Heart right ventricle (tissue), 16 donors: ENCODE measurements at regions of chr1 and their contacts with region 1.

Region 1: GRCh38 chr1:161225534-161226319 is at the start of gene TOMM40L:
- DNase-seq: peak; percentile 85 to 95
- ATAC-seq: peak; percentile 95 to 97 (median 96)
- H3K4me3 ChIP-seq: peak within 1 kb of the TSS; percentile 50 to 94 (median 68)
- H3K27ac ChIP-seq: peak within 1 kb of the TSS; percentile 51 to 92 (median 86)
- H3K4me1 ChIP-seq: peaks cover 6 to 30% (median 25%) of the 10 kb centered on the region in 9 donors
- H3K27me3 ChIP-seq: no peaks in the 10 kb centered on the region
- CTCF ChIP-seq: peak; percentile 17 to 76 (median 57)
- total RNA-seq, gene TOMM40L: 29.8 to 37.6 (median 33.2) TPM

Region 2: DNA sequence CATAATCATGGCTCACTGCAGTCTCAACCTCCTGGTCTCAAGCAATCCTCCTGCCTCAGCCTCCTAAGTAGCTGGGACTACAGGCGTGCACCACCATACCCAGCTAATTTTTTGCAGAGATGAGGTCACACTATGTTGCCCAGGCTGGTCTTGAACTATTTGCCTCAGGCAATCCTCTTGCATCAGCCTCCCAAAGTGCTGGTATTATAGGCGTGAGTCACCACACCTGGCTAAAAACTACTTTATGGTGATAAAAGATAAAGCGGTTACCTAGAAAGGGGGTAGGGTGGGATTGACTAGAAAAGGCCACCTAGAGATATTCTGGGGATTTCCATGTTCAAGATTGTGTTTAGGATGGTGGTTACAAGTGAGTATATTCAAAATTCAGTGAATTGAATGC is 192.0 kb before region 1 on chr1:
- intact Hi-C with region 1: no loop called
- DNase-seq: no peak
- ATAC-seq: no peak
- H3K4me3 ChIP-seq: no peak overlapping the region
- H3K27ac ChIP-seq: no peak overlapping the region
- H3K4me1 ChIP-seq: peaks cover 0 to 26% (median 0%) of the 10 kb centered on the region in 9 donors
- H3K27me3 ChIP-seq: no peaks in the 10 kb centered on the region
- CTCF ChIP-seq: no peak

Region 3: GRCh38 chr1:161177936-161178244 is 47.8 kb before region 1 on chr1:
- intact Hi-C with region 1: loop called in 1 of 10 experiments (anchors 2 kb)
- DNase-seq: no peak
- ATAC-seq: no peak
- H3K4me3 ChIP-seq: peak overlapping the region in 9 of 10 donors; percentile 60 to 89 (median 73)
- H3K27ac ChIP-seq: peak overlapping the region; percentile 70 to 93 (median 88)
- H3K4me1 ChIP-seq: peaks cover 3 to 53% (median 24%) of the 10 kb centered on the region in 9 donors
- H3K27me3 ChIP-seq: no peaks in the 10 kb centered on the region
- CTCF ChIP-seq: peak in 1 of 9 donors; percentile 2

Region 4: DNA sequence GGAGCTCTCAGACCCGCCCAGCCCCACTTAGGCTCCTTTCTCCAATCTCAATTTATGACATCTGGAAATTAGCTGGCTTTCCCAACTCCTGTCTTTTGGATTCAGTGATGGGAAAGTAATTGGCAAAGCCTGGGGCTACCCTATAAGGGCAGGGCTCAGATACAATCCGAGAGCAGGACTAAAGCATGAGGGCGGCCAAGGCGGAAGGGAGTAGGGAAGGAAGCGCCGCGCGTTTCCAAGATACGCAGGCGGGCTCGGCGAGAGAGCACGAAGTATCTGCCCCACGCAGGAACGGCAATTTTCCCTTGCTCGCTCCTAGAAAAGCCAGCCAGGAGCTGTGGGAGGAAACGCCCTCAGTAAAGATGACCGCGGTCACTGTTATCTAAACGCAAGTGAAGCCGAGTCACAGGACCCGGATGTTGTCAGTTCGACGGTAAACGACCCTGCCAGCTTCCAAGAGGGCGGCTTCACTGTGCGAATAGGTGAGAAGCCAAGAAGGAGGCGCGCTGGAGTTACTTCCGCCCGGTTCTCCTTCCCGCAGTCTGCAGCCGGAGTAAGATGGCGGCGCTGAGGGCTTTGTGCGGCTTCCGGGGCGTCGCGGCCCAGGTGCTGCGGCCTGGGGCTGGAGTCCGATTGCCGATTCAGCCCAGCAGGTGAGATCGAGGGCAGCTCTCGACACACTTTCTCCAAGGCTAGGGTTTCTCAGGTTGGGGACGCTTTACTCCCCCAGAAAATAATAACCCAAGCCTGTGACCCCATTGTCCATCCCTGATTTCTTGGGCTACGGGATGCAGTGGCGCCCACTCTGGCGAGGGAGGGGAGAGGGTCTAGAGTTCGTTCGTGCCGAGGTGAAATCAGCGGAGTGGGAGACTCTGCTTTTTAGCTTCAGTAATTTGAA is 23.6 kb before region 1 on chr1 and contains the start of gene NDUFS2:
- intact Hi-C with region 1: loop called in 2 of 10 experiments (anchors 1 to 2 kb)
- DNase-seq: peak; percentile 95 to 99
- ATAC-seq: peak; percentile 79 to 91 (median 88)
- H3K4me3 ChIP-seq: peak within 1 kb of the TSS; percentile 72 to 94 (median 85)
- H3K27ac ChIP-seq: peak within 1 kb of the TSS; percentile 93 to 100 (median 98)
- H3K4me1 ChIP-seq: peaks cover 48 to 92% (median 85%) of the 10 kb centered on the region in 9 donors
- H3K27me3 ChIP-seq: no peaks in the 10 kb centered on the region
- CTCF ChIP-seq: peak in 2 of 9 donors; percentile 10 to 21
- total RNA-seq, gene NDUFS2: 244 to 370 (median 318) TPM

Region 5: GRCh38 chr1:161266202-161266601 is 40.5 kb after region 1 on chr1:
- intact Hi-C with region 1: no loop called
- DNase-seq: no peak
- ATAC-seq: peak in 1 of 8 donors; percentile 26
- H3K4me3 ChIP-seq: no peak overlapping the region
- H3K27ac ChIP-seq: peak overlapping the region in 1 of 10 donors; percentile 44
- H3K4me1 ChIP-seq: peaks cover 0 to 15% (median 5%) of the 10 kb centered on the region in 9 donors
- H3K27me3 ChIP-seq: peaks cover 0 to 13% (median 2%) of the 10 kb centered on the region in 7 donors
- CTCF ChIP-seq: no peak

Region 6: DNA sequence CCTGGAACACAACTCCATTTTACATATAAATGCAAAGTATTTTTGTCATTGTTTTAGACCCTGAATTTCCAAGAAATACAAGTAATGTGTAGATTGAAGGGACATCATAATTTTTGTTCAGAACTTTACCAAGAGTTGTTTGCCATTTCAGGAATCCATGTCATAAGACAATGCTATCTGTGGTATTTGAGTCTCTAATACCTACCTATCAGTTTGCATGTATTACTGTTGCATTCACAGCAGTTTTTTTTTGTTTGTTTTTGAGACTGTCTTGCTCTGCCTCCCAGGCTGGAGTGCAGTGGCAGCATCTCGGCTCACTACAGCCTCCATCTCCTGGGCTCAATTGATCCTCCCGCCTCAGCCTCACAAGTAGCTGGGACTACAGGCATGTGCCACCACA is 66.9 kb after region 1 on chr1:
- intact Hi-C with region 1: loop called (anchors 2 to 10 kb)
- DNase-seq: no peak
- ATAC-seq: no peak
- H3K4me3 ChIP-seq: no peak overlapping the region
- H3K27ac ChIP-seq: no peak overlapping the region
- H3K4me1 ChIP-seq: peaks cover 0 to 16% (median 0%) of the 10 kb centered on the region in 9 donors
- H3K27me3 ChIP-seq: no peaks in the 10 kb centered on the region
- CTCF ChIP-seq: no peak

Region 7: DNA sequence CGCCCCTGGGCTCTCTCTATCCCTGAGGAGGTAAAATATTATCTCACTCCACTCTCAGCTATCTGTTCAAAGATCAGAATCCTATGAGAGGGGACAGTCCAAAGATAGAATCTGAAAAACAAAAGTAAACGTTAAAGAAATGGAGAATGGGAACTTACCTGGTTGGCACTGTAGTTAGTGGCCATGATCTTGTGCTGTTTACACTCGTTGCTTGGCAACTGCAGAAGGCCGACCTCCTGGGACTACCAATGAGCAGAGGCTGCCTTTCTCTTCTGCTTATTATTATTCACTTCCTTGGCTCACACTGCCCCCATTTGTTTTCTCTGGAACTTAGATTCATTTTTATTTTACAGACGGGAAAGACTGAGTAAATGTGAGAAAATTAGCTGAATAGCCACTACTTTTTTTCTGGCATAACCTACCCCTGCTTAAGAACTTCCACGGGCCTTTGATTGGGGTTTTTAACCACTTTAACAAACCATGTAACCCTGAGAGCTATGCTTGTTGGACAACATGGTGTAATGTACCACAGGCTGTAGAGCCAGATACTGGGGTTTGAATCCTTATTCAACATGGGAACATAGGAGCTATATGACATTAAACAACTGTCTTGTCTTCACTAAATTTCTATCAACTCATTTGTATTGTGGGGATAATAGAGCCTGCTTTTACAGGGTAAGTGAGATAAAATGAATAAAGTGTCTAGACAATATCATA is 142.1 kb after region 1 on chr1 and contains the start of gene CFAP126:
- intact Hi-C with region 1: loop called in 3 of 10 experiments (anchors 5 kb)
- DNase-seq: peak; percentile 35 to 79
- ATAC-seq: peak; percentile 88 to 96 (median 93)
- H3K4me3 ChIP-seq: no peak within 1 kb of the TSS
- H3K27ac ChIP-seq: peak within 1 kb of the TSS in 6 of 10 donors; percentile 8 to 69 (median 27)
- H3K4me1 ChIP-seq: peaks cover 0 to 14% (median 7%) of the 10 kb centered on the region in 9 donors
- H3K27me3 ChIP-seq: no peaks in the 10 kb centered on the region
- CTCF ChIP-seq: peak in 6 of 9 donors; percentile 25 to 54 (median 35)
- total RNA-seq, gene CFAP126: not detected

Region 8: DNA sequence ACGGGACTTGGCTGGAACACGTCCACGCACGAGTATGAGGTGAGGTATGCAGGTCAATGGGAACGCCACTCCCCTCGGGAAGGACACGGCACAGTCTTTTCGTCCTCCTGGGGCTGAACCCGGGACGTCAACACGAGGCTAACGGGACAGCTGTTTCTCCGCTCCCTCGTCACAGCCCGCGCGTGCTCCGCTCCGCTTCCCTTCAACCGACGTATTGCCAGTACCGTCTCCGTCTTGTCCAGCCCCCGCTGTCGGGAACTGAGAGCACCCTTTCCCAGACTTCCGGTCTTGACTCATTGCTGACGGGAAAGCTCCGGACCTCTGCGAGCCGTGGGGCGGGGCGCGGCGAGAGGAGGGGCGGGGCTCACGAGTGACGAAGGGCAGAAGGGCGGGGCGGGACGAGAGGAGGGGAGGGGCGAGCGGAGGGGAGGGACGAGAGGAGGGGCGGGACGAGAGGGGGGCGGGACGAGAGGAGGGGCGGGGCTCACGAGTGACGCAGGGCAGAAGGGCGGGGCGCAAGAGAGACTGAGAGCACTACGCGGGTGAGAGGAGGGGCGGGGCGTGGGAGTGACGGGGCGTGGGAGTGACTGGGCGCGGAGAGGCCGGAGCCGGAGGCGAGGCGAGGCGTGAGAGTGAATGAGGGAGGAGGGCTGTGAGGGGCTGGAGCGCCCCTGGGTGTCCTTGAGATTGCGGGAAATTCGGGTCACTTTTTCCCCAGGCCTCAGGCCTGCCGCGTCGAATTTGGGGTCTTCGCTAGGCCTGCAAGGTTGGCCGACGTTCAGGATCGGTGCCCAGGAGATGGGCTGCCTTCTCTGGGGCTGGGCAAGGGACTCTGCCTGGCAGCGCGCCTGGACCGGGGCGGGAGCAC is 164.2 kb after region 1 on chr1:
- intact Hi-C with region 1: loop called in 1 of 10 experiments (anchors 10 kb)
- DNase-seq: peak; percentile 98 to 99
- ATAC-seq: peak; percentile 95 to 97 (median 96)
- H3K4me3 ChIP-seq: peak overlapping the region; percentile 51 to 81 (median 70)
- H3K27ac ChIP-seq: peak overlapping the region; percentile 68 to 99 (median 92)
- H3K4me1 ChIP-seq: peaks cover 0 to 33% (median 9%) of the 10 kb centered on the region in 9 donors
- H3K27me3 ChIP-seq: no peaks in the 10 kb centered on the region
- CTCF ChIP-seq: no peak